GM13976 (cell line): ENCODE measurements at regions of chr15 and their contacts with region 1.

Region 1: GRCh38 chr15:23014394-23015000 is 24.9 kb downstream of the TUBGCP5 start:
- DNase-seq: no peak
- CTCF ChIP-seq: no peak

Region 2: DNA sequence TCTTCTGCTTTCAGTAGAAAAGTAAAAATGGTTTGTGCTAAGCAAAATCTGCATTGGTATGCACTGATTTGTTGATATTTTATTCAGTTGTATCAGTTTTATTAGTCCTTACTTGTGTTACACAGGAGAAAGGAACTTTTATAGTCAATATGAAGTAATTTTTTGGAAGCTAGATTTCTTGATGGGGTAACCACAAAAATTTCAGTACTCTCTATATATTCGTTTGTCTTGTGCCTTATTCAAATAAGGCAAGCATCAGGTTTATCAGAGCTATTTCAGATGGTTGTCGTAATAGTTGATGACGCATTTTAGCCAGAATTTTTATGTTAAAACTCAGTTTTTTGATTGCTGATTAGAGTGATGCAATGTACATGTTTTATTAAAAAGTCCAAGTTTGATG is 278.7 kb before region 1 on chr15:
- in situ Hi-C with region 1: no loop called
- DNase-seq: no peak
- CTCF ChIP-seq: no peak

Region 3: DNA sequence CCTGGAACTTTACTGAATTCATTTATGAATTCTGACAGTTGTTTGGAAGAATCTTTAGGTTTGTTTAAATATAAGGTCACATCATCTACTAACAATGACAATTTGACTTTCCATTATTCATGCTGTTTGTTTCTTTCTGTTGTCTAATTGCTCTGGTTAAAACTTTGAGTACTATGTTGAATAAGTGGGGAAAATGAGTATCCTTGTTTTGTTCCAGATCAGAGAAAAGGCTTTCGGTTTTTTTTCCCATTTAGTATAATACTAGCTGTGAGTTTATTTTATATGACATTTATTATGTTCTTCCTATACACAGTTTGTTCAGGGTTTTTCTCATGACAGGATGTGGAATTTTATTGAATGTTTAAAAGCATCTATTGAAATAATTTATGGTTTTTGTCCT is 36.2 kb after region 1 on chr15:
- in situ Hi-C with region 1: no loop called
- DNase-seq: no peak
- CTCF ChIP-seq: no peak

Region 4: GRCh38 chr15:23073890-23074646 is 59.6 kb after region 1 on chr15:
- in situ Hi-C with region 1: loop called (anchors 10 kb)
- DNase-seq: no peak
- CTCF ChIP-seq: no peak